ENCODE measurements at regions of chr14 and their contacts with region 1.

Region 1: GRCh38 chr14:71855399-71856036 is 76.7 kb upstream of the RGS6 start:
- DNase-seq: peak; percentile 87
- ATAC-seq: peak; percentile 84
- H3K4me3 Mint-ChIP-seq: no peak overlapping the region
- H3K27ac Mint-ChIP-seq: no peak overlapping the region
- H3K4me1 Mint-ChIP-seq: peaks cover 15% of the 10 kb centered on the region
- H3K27me3 Mint-ChIP-seq: peaks cover 8% of the 10 kb centered on the region; the same call in 1 of the 2 replicates
- CTCF ChIP-seq: peak; percentile 64

Region 2: GRCh38 chr14:71302870-71303269 is 552.6 kb before region 1 on chr14:
- CTCF ChIA-PET with region 1: no interaction called
- POLR2A ChIA-PET with region 1: no interaction called
- DNase-seq: no peak
- ATAC-seq: no peak
- H3K4me3 Mint-ChIP-seq: no peak overlapping the region
- H3K27ac Mint-ChIP-seq: no peak overlapping the region
- H3K4me1 Mint-ChIP-seq: no peaks in the 10 kb centered on the region
- H3K27me3 Mint-ChIP-seq: no peaks in the 10 kb centered on the region
- CTCF ChIP-seq: no peak

Region 3: DNA sequence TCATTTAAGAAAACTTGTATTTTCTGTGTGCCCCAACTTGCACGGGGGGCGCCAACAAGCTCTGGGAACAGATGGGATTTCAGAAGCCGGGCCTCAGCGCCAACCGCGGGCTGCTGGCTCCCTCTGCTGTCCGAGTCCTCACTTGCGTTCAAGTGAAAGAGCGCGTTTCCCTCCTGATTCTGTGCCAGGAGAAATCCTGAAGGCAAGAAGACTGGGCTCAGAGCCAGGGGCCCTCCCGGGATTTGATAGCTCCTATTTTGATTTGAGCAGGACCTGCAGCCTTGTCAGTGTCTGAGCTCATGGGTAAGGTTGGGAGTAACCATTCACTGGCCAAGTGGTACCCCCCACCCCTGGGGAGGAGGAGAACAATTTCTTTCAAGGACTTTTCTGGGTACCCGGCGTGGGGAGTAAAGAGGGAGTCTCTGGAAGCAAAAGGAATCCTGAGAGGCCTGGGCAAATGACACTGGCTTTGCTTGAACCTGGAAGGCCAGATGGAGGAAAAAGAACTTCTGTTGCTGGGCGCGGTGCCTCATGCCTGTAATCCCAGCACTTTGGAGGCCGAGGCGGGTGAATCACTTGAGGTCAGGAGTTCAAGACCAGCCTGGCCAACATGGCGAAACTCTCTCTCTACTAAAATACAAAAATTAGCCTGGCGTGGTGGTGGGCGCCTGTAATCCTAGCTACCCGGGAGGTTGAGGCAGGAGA is 102.2 kb before region 1 on chr14:
- CTCF ChIA-PET with region 1: interaction called, 89 read pairs
- POLR2A ChIA-PET with region 1: interaction called, 5 read pairs
- DNase-seq: peak; percentile 91
- ATAC-seq: peak; percentile 86
- H3K4me3 Mint-ChIP-seq: 0 out of 2 replicates have a peak overlapping the region, but pooled peaks have one; percentile 6
- H3K27ac Mint-ChIP-seq: no peak overlapping the region
- H3K4me1 Mint-ChIP-seq: peaks cover 26% of the 10 kb centered on the region
- H3K27me3 Mint-ChIP-seq: peaks cover 3% of the 10 kb centered on the region; the same call in 1 of the 2 replicates
- CTCF ChIP-seq: peak; percentile 73

Region 4: GRCh38 chr14:71764701-71765382 is 90.7 kb before region 1 on chr14:
- CTCF ChIA-PET with region 1: interaction called, 12 read pairs
- POLR2A ChIA-PET with region 1: no interaction called
- DNase-seq: no peak
- ATAC-seq: no peak
- H3K4me3 Mint-ChIP-seq: no peak overlapping the region
- H3K27ac Mint-ChIP-seq: 0 out of 2 replicates have a peak overlapping the region, but pooled peaks have one; percentile 82
- H3K4me1 Mint-ChIP-seq: peaks cover 9% of the 10 kb centered on the region
- H3K27me3 Mint-ChIP-seq: no peaks in the 10 kb centered on the region
- CTCF ChIP-seq: no peak

Region 5: DNA sequence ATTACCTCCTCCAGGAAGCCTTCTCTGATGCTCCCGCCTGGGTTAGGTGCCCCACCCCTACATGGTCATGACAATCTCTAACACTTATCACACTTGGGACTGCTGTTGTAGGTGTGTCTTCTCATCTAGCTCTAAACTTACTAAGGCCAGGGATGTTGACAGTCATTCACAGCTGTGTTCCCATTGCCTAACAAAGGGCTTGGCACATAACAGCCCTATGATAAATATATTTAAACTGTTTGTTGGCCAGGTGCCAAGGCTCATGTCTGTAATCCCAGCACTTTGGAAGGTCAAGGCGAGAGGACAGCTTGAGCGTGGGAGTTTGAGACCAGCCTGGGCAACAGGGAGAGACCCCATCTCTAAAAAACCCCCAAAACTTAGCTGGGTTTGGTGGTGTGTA is 22.0 kb before region 1 on chr14:
- CTCF ChIA-PET with region 1: interaction called, 17 read pairs
- POLR2A ChIA-PET with region 1: no interaction called
- DNase-seq: no peak
- ATAC-seq: no peak
- H3K4me3 Mint-ChIP-seq: no peak overlapping the region
- H3K27ac Mint-ChIP-seq: no peak overlapping the region
- H3K4me1 Mint-ChIP-seq: peaks cover 18% of the 10 kb centered on the region
- H3K27me3 Mint-ChIP-seq: no peaks in the 10 kb centered on the region
- CTCF ChIP-seq: no peak

Region 6: GRCh38 chr14:71932220-71932981 is 76.9 kb after region 1 on chr14 and contains the start of gene RGS6:
- CTCF ChIA-PET with region 1: interaction called, 12 read pairs
- POLR2A ChIA-PET with region 1: no interaction called
- DNase-seq: peak; percentile 82
- ATAC-seq: peak; percentile 93
- H3K4me3 Mint-ChIP-seq: peak within 1 kb of the TSS; percentile 79
- H3K27ac Mint-ChIP-seq: no peak within 1 kb of the TSS
- H3K4me1 Mint-ChIP-seq: peaks cover 17% of the 10 kb centered on the region
- H3K27me3 Mint-ChIP-seq: peaks cover 55% of the 10 kb centered on the region
- CTCF ChIP-seq: no peak
- total RNA-seq, gene RGS6: 1.0 to 1.2 TPM (median 1.2 TPM) in 3 replicates

Measured in WTC11 (cell line).